Activated naive CD4-positive, alpha-beta T cell treated with anti-CD3 and anti-CD28 coated beads for 36 hours (primary cell): ENCODE measurements at regions of chr9 and their contacts with region 1.

Region 1: DNA sequence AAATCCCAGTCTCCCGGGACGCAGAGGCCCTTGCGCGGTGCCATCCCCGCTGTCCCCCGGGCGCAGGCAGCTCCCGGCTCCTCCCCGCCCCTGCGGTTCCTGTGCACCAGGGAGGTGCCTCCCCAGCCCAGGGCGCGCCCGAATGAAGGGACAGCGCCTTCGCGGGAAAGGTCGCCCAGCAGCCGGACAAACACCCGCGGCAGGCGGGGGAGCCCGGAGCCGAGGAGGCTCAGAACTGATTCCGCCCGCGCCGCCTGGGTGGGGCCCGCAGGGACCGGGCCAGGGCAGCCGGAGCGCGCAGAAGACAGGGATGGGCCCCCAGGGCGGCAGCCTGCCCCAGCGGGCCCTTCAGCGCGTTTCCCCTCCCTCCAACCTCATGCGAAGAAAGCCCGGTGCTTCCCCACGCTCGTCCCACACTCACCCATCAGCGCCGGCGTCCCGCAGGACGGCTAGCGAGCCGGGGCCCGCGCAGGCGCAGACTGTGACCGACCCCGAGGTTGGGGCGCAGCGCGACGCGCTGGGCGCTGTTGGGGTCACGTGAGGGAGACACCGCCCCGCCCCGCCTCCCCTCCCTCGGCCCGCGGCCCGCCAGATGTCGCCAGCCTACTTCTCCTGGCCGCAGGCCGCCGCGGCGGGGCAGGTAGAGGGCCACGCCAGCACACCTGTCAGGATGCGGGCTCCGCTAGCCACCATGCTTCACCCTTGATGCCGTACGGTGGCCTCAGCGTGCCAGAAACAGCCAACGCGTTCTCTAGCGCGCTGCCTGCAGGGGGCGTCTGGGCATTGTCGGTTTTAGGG is at the start of gene SLC25A51:
- DNase-seq: peak; percentile 97
- H3K4me3 Mint-ChIP-seq: peak within 1 kb of the TSS; percentile 85
- H3K27ac Mint-ChIP-seq: peak within 1 kb of the TSS; percentile 87
- H3K4me1 Mint-ChIP-seq: peaks cover 16% of the 10 kb centered on the region
- H3K27me3 Mint-ChIP-seq: no peaks in the 10 kb centered on the region
- total RNA-seq, gene SLC25A51: 20.0 to 20.3 TPM

Region 2: DNA sequence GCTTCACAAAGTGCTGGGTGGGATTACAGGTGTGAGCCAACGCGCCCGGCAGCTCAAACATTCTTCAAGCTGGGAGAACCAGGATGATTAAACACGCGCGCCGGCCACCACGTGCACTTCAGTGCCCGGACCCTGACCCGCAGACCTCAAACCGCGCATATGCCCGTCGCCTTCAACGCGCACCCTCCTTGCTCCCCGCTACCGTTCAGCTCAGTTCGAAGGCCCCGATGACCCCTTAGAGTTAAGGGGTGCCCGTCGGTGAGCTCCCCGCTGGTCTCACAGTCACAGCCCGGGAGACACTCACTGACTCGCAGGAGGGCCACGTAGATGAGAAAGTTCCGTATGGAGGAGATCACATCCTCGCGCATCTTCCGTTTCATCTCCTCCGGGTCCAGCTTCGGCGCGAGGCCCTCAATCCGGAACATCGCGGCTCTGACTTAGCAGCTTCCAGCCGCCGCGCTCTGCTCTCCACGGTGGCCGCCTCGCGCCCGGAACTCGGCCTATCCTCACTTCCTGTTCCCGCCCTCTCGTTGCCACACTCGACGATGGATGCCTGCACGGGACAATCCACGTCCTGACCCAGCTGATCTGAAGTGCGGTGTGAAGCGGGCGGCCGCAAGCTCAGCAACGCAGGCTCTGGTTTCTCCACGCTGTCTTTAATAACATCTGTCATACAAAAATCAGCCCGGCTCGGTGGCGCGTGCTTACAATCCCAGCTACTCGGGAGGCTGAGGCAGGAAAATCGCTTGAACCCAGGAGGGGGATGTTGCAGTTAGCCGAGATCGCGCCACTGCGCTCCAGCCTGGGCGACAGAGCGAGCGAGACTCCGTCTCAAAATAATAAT is 311.5 kb before region 1 on chr9 and contains the start of gene TOMM5:
- CTCF ChIA-PET with region 1: interaction called, 3 read pairs
- intact Hi-C with region 1: loop called (anchors 1 kb)
- DNase-seq: peak; percentile 96
- H3K4me3 Mint-ChIP-seq: peak within 1 kb of the TSS; percentile 92
- H3K27ac Mint-ChIP-seq: peak within 1 kb of the TSS; percentile 93
- H3K4me1 Mint-ChIP-seq: peaks cover 37% of the 10 kb centered on the region
- H3K27me3 Mint-ChIP-seq: peaks cover 3% of the 10 kb centered on the region
- total RNA-seq, gene TOMM5: 136 to 140 TPM

Region 3: GRCh38 chr9:37746848-37747753 is 156.7 kb before region 1 on chr9:
- CTCF ChIA-PET with region 1: interaction called, 3 read pairs
- intact Hi-C with region 1: loop called (anchors 1 kb)
- DNase-seq: peak; percentile 80
- H3K4me3 Mint-ChIP-seq: no peak overlapping the region
- H3K27ac Mint-ChIP-seq: no peak overlapping the region
- H3K4me1 Mint-ChIP-seq: no peaks in the 10 kb centered on the region
- H3K27me3 Mint-ChIP-seq: no peaks in the 10 kb centered on the region

Region 4: GRCh38 chr9:37784616-37785483 is 119.0 kb before region 1 on chr9 and contains the start of gene EXOSC3:
- CTCF ChIA-PET with region 1: no interaction called
- intact Hi-C with region 1: loop called (anchors 1 kb)
- DNase-seq: peak; percentile 91
- H3K4me3 Mint-ChIP-seq: peak within 1 kb of the TSS; percentile 96
- H3K27ac Mint-ChIP-seq: peak within 1 kb of the TSS; percentile 94
- H3K4me1 Mint-ChIP-seq: peaks cover 37% of the 10 kb centered on the region
- H3K27me3 Mint-ChIP-seq: no peaks in the 10 kb centered on the region
- total RNA-seq, gene EXOSC3: 93.7 to 99.7 TPM

Region 5: DNA sequence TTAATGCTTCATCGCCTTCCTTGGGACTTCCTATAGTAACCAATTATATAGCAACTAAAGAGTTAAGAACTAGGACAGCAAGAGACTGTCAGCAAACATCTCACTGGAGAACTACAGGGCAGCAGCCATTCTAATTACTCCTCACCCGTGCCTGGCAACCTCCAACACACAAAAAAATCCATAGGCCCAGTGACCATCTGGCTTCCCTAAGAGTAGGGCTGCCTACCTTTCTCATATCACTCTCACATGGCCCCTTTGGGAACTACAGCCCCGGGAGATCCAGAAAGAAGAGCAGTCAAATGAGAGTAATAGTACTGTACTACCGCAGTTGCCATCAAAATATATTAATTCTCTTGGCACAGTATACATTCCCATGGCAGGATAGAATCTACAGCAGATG is 97.6 kb before region 1 on chr9:
- CTCF ChIA-PET with region 1: no interaction called
- intact Hi-C with region 1: no loop called
- DNase-seq: no peak
- H3K4me3 Mint-ChIP-seq: no peak overlapping the region
- H3K27ac Mint-ChIP-seq: no peak overlapping the region
- H3K4me1 Mint-ChIP-seq: peaks cover 28% of the 10 kb centered on the region
- H3K27me3 Mint-ChIP-seq: no peaks in the 10 kb centered on the region

Region 6: GRCh38 chr9:37859043-37859442 is 44.8 kb before region 1 on chr9:
- CTCF ChIA-PET with region 1: no interaction called
- intact Hi-C with region 1: no loop called
- DNase-seq: no peak
- H3K4me3 Mint-ChIP-seq: no peak overlapping the region
- H3K27ac Mint-ChIP-seq: no peak overlapping the region
- H3K4me1 Mint-ChIP-seq: no peaks in the 10 kb centered on the region
- H3K27me3 Mint-ChIP-seq: no peaks in the 10 kb centered on the region

Region 7: DNA sequence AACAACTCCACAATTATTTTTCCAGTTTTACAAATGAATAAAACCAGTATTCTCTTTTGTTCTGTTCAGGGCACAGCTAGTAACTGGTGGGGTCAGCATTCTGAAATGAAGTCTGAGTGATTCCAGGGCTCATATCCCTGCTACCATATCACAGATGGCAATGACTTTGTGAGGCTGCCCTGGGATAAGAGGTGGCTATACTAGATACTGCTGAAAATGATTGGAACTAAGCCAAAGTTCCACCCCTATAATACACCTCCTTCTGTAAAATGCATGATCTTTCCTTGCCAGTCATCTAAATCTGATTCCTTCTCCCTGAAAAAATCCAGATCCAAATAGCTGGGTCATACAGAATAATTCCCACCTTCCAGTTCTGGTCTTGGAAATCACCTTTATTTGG is 14.3 kb before region 1 on chr9:
- CTCF ChIA-PET with region 1: no interaction called
- intact Hi-C with region 1: no loop called
- DNase-seq: no peak
- H3K4me3 Mint-ChIP-seq: no peak overlapping the region
- H3K27ac Mint-ChIP-seq: no peak overlapping the region
- H3K4me1 Mint-ChIP-seq: peaks cover 2% of the 10 kb centered on the region
- H3K27me3 Mint-ChIP-seq: no peaks in the 10 kb centered on the region

Region 8: GRCh38 chr9:37953775-37954437 is 50.1 kb after region 1 on chr9:
- CTCF ChIA-PET with region 1: no interaction called
- intact Hi-C with region 1: loop called (anchors 5 kb)
- DNase-seq: peak; percentile 66
- H3K4me3 Mint-ChIP-seq: no peak overlapping the region
- H3K27ac Mint-ChIP-seq: peak overlapping the region; percentile 69
- H3K4me1 Mint-ChIP-seq: peaks cover 21% of the 10 kb centered on the region
- H3K27me3 Mint-ChIP-seq: no peaks in the 10 kb centered on the region

Region 9: GRCh38 chr9:38227061-38227540 is 323.3 kb after region 1 on chr9:
- CTCF ChIA-PET with region 1: no interaction called
- intact Hi-C with region 1: loop called (anchors 5 kb)
- DNase-seq: peak; percentile 86
- H3K4me3 Mint-ChIP-seq: peak overlapping the region; percentile 61
- H3K27ac Mint-ChIP-seq: peak overlapping the region; percentile 13
- H3K4me1 Mint-ChIP-seq: peaks cover 18% of the 10 kb centered on the region
- H3K27me3 Mint-ChIP-seq: no peaks in the 10 kb centered on the region

Region 10: GRCh38 chr9:38620483-38621433 is 716.9 kb after region 1 on chr9 and contains the start of gene ANKRD18A:
- CTCF ChIA-PET with region 1: interaction called, 3 read pairs
- intact Hi-C with region 1: loop called (anchors 1 kb)
- DNase-seq: peak; percentile 87
- H3K4me3 Mint-ChIP-seq: peak within 1 kb of the TSS; percentile 92
- H3K27ac Mint-ChIP-seq: peak within 1 kb of the TSS; percentile 90
- H3K4me1 Mint-ChIP-seq: peaks cover 11% of the 10 kb centered on the region
- H3K27me3 Mint-ChIP-seq: peaks cover 11% of the 10 kb centered on the region
- total RNA-seq, gene ANKRD18A: 6.1 to 8.1 TPM